ENCODE measurements at regions of chr1 and their contacts with region 1.

Region 1: DNA sequence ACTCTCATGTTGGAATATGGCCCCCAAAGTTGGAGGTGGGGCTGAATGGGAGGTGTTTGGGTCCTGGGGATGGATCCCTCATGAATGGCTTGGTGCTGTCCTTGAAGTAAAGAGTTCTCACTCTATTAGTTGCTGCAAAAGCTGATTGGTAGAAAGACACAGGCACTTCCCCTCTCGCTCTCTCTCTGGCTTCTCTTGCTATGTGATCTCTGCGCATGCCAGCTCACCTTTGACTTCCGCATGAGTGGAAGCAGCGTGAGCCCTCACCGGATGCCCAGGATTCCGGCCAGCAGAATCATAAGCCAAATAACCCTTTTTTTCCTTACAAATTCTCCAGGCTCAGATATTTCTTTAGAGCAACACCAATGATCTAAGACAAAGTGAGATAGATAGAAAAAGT is 20.9 kb upstream of the CCSAP start:
- DNase-seq: no peak
- H3K4me3 ChIP-seq: no peak overlapping the region
- H3K27ac ChIP-seq: no peak overlapping the region
- H3K4me1 ChIP-seq: no peaks in the 10 kb centered on the region
- H3K27me3 ChIP-seq: peaks cover 0 to 5% of the 10 kb centered on the region in 2 donors
- CTCF ChIP-seq: no peak
- POLR2A ChIP-seq: no peak

Region 2: GRCh38 chr1:229407204-229408026 is 43.7 kb after region 1 on chr1:
- intact Hi-C with region 1: loop called (anchors 1 kb)
- DNase-seq: no peak
- H3K4me3 ChIP-seq: peak overlapping the region; percentile 10 to 52 (median 38)
- H3K27ac ChIP-seq: no peak overlapping the region
- H3K4me1 ChIP-seq: no peaks in the 10 kb centered on the region
- H3K27me3 ChIP-seq: peaks cover 0 to 54% of the 10 kb centered on the region in 2 donors
- CTCF ChIP-seq: no peak
- POLR2A ChIP-seq: no peak

Region 3: GRCh38 chr1:229523052-229523451 is 159.3 kb after region 1 on chr1:
- intact Hi-C with region 1: loop called (anchors 5 kb)
- DNase-seq: no peak
- H3K4me3 ChIP-seq: no peak overlapping the region
- H3K27ac ChIP-seq: no peak overlapping the region
- H3K4me1 ChIP-seq: no peaks in the 10 kb centered on the region
- H3K27me3 ChIP-seq: no peaks in the 10 kb centered on the region
- CTCF ChIP-seq: no peak
- POLR2A ChIP-seq: no peak